Activated T-helper 1 cell treated with anti-CD3 and anti-CD28 coated beads, Interleukin-12 subunit alpha, Interleukin-12 subunit beta, Interleukin-2, Interleukin-4 antibody, amounts not matched to agents 30 ng/mL and 10 ng/mL and 1 ng/mL, durations not matched to agents 14 hours and 24 hours and 36 hours (primary cell): ENCODE measurements at regions of chr22 and their contacts with region 1.

Region 1: GRCh38 chr22:39253435-39254070 is 8.8 kb upstream of the PDGFB start:
- DNase-seq: peak; percentile 41
- H3K4me3 Mint-ChIP-seq: no peak overlapping the region
- H3K27ac Mint-ChIP-seq: no peak overlapping the region
- H3K4me1 Mint-ChIP-seq: peaks cover 30% of the 10 kb centered on the region
- H3K27me3 Mint-ChIP-seq: peaks cover 6% of the 10 kb centered on the region

Region 2: GRCh38 chr22:39242595-39243438 is 10.7 kb before region 1 on chr22:
- intact Hi-C with region 1: no loop called
- DNase-seq: no peak
- H3K4me3 Mint-ChIP-seq: peak overlapping the region; percentile 57
- H3K27ac Mint-ChIP-seq: no peak overlapping the region
- H3K4me1 Mint-ChIP-seq: peaks cover 18% of the 10 kb centered on the region
- H3K27me3 Mint-ChIP-seq: peaks cover 60% of the 10 kb centered on the region

Region 3: GRCh38 chr22:39266398-39267030 is 13.0 kb after region 1 on chr22:
- intact Hi-C with region 1: loop called (anchors 1 kb)
- DNase-seq: peak; percentile 28
- H3K4me3 Mint-ChIP-seq: no peak overlapping the region
- H3K27ac Mint-ChIP-seq: peak overlapping the region; percentile 89
- H3K4me1 Mint-ChIP-seq: peaks cover 28% of the 10 kb centered on the region
- H3K27me3 Mint-ChIP-seq: peaks cover 2% of the 10 kb centered on the region

Region 4: GRCh38 chr22:39319270-39320022 is 65.9 kb after region 1 on chr22 and contains the start of gene RPL3:
- intact Hi-C with region 1: no loop called
- DNase-seq: peak; percentile 96
- H3K4me3 Mint-ChIP-seq: peak within 1 kb of the TSS; percentile 99
- H3K27ac Mint-ChIP-seq: peak within 1 kb of the TSS; percentile 99
- H3K4me1 Mint-ChIP-seq: peaks cover 42% of the 10 kb centered on the region
- H3K27me3 Mint-ChIP-seq: no peaks in the 10 kb centered on the region
- total RNA-seq, gene RPL3: 1,905 and 1,941 TPM in 2 replicates